GM18951 (cell line): ENCODE measurements at regions of chr17 and their contacts with region 1.

Region 1: GRCh38 chr17:64025732-64026294 is 5.4 kb upstream of the ICAM2 start:
- POLR2A ChIP-seq: no peak

Region 2: DNA sequence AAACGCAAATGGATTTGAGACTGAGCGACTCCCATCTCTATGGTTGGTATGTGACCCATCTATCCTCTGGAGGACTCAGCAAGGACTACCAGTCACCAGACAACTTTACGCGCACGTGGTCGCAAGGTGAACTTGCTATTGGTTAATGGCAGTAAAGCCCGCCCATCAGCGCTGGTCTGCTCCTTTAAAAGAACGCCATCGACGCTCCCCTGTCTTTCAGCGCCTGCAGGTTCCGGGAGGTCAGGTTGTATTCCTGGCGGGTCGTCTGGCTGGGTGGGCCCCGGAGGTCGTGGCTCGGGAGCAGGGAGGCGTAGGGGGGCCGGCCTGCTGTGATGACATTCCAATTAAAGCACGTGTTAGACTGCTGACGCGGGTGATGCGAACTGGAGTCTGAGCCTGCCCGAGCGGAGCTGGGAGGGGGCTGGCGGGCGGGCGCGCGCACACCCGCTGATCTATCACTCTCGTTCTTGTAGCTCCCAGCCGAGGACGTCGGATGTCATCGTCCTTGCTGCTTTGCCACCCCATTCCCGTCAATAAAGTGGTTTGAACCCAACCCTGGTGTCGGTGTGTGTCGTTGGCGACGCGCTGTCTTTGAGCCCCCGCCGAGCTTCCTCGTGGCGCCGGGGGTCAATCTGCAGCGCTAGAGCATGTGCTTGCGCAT is 120.1 kb after region 1 on chr17:
- in situ Hi-C with region 1: loop called (anchors 5 kb)
- POLR2A ChIP-seq: peak; percentile 100

Region 3: GRCh38 chr17:64281962-64282727 is 256.3 kb after region 1 on chr17:
- in situ Hi-C with region 1: loop called (anchors 25 kb)
- POLR2A ChIP-seq: no peak